ENCODE measurements at regions of chr10 and their contacts with region 1.

Region 1: GRCh38 chr10:28179006-28179742 is 123.7 kb downstream of the MPP7 start:
- DNase-seq: no peak
- ATAC-seq: peak in 3 of 4 donors; percentile 53 to 81 (median 66)
- H3K4me3 ChIP-seq: no peak overlapping the region
- H3K27ac ChIP-seq: no peak overlapping the region
- H3K4me1 ChIP-seq: peaks cover 19% of the 10 kb centered on the region
- H3K27me3 ChIP-seq: no peaks in the 10 kb centered on the region
- CTCF ChIP-seq: peak; percentile 80

Region 2: DNA sequence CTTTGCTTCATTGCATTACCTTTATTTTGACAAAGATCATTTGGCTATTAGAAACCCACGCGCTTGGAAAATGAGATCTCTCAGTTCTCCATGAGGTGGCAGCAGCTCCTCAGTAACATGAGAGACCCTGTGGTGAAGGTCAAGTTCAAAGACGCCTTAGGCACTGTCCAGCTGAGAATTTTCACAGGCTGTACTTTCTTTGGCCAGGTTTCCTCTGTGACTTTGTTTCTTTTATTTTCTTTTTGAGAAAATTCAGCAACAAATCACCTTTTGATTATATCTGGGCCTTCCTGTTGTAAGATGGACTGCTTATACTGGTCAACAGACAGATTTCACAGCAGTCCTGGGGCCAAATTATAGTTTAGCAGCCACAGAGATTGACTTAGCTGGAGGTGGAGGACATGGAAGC is 620.6 kb before region 1 on chr10:
- intact Hi-C with region 1: loop called in 1 of 2 experiments (anchors 5 kb)
- DNase-seq: peak in 1 of 2 donors; percentile 29
- ATAC-seq: peak; percentile 80 to 92 (median 82)
- H3K4me3 ChIP-seq: no peak overlapping the region
- H3K27ac ChIP-seq: no peak overlapping the region
- H3K4me1 ChIP-seq: no peaks in the 10 kb centered on the region
- H3K27me3 ChIP-seq: no peaks in the 10 kb centered on the region
- CTCF ChIP-seq: peak; percentile 70

Region 3: DNA sequence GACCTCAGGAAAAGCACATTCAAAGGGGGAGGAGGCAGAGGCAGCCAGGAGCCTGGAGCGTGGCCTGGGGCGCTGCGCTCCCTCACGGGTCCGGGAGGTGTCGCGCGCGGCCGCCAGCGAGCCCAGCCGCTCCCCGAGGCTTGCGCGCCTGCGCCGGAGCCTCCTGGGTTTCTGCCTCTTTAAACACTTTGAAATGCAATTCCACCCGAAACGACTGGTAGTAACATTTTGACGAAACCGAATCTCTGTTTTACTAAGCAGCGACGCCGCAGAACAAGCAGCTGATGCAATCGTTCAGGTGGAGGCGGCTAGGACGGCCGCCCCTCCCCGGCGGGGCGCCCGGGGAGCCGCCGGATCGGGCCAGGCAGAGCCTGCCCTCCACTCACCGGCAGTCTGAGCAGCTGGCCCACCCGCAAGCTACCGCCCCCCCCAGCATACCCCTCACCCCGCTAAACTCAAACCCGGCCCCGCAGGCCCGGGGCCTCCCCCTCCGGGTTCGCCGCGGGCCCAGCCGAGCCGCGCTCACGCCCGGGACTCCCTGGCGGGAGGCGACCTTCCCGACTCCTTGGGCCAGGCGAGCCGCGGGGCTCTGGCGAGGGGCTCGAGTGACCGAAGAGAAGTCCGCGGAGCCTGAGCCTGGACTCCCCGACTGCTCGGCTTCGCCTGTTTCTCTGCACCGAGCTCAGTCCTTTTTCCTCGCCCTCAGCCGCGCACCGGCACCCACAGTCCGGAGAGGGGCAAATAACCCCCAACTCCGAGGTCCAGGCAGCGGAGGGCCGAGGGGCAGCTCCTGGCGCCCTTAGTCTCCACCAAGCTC is 436.8 kb before region 1 on chr10:
- intact Hi-C with region 1: loop called (anchors 5 kb)
- DNase-seq: peak; percentile 85 to 86
- ATAC-seq: peak; percentile 87 to 92 (median 90)
- H3K4me3 ChIP-seq: peak overlapping the region; percentile 75
- H3K27ac ChIP-seq: peak overlapping the region; percentile 37
- H3K4me1 ChIP-seq: peaks cover 22% of the 10 kb centered on the region
- H3K27me3 ChIP-seq: peaks cover 0 to 59% (median 34%) of the 10 kb centered on the region in 3 donors
- CTCF ChIP-seq: peak; percentile 77

Region 4: DNA sequence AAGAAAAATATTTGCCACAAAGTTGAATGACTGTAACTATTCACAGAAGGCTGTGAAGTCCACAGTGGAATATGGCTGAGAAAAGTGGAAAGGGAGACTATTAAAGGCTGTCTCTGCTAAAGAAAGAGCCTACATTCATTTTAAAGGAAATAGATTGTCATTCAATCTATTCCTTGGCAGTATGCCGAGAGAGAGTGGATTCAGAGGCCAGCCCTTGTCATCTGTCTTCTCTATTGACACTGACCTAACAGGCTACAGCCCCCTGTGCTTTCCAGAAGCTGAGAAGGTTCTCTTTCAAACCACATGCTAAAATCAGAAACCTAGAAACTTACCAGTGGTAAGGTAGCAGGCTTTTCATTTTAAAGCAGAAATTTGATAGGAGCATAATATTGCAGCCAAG is 192.4 kb before region 1 on chr10:
- intact Hi-C with region 1: no loop called
- DNase-seq: no peak
- ATAC-seq: no peak
- H3K4me3 ChIP-seq: no peak overlapping the region
- H3K27ac ChIP-seq: no peak overlapping the region
- H3K4me1 ChIP-seq: no peaks in the 10 kb centered on the region
- H3K27me3 ChIP-seq: no peaks in the 10 kb centered on the region
- CTCF ChIP-seq: no peak

Region 5: GRCh38 chr10:28036587-28036986 is 142.6 kb before region 1 on chr10:
- intact Hi-C with region 1: no loop called
- DNase-seq: no peak
- ATAC-seq: no peak
- H3K4me3 ChIP-seq: no peak overlapping the region
- H3K27ac ChIP-seq: no peak overlapping the region
- H3K4me1 ChIP-seq: no peaks in the 10 kb centered on the region
- H3K27me3 ChIP-seq: peaks cover 0 to 8% (median 0%) of the 10 kb centered on the region in 3 donors
- CTCF ChIP-seq: no peak

Region 6: DNA sequence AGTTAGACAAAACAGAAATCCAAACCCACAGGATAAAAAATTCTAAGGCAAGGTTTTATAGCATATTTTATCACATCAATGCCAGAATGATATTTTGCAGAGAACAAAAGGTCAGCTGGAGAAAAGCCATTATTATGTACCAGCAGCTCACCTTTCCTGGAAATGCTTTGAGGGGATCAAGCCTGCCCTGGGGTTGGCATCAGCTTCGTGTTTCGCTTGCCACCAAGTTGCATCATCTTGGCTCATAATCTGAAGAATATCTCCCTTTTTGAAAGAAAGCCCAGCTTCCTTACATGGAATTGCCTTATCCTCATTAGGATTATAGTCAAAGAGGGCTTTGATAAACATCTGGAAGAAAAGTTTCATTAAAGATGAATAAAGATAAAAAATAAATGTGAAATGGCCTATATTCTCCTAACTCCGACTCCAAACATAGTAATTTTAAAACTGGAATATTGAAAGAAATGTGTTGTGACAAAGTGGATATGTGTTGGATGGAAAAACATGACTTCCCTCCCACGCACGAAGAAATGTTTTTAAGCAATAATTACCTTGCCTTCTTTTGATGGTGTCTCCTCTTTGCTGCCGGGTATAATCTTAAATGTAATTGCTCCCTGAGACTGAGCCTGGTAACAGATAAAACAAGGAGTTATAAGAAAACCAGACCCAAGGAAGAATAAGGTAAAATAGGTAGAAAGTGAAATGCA is 59.0 kb before region 1 on chr10:
- intact Hi-C with region 1: loop called in 1 of 2 experiments (anchors 10 kb)
- DNase-seq: peak in 1 of 2 donors; percentile 15
- ATAC-seq: peak in 2 of 4 donors; percentile 46 to 53
- H3K4me3 ChIP-seq: no peak overlapping the region
- H3K27ac ChIP-seq: no peak overlapping the region
- H3K4me1 ChIP-seq: peaks cover 22% of the 10 kb centered on the region
- H3K27me3 ChIP-seq: no peaks in the 10 kb centered on the region
- CTCF ChIP-seq: no peak

Region 7: DNA sequence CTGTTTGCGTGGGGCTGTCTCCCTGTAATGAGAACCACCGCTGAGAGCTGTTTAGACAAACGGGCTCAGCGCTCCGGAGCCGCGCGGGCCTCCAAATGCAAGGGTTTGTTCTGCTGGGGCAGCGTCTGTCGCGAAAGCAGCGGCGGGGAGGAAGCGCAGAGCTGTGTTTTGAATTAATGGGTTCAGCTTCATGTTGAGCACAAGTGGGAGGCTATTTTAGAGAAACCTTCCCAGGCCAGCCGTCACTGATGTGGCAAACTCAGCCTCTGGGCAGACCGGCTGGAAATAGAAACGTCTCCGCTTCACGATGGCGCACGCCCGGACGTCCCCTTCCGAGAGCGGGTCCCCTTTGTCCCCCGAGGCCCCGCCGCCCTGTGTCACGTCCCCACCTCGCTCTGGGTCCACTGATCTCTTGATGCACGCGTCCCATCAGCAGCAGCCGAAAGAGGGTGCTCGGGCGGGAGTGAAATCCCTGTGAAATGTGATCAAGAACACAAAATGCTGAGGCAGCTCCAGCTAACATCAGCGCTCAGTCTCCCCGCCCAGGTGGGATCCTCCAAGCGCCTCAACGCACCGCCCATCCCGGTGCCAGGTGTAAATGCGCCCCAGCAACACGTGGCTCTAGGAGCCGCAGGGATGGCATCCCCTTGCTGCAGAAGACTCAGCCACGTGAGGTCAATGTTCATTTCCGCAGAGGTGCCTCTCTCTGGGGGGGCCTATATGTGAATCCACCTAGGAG is 543.1 kb after region 1 on chr10:
- intact Hi-C with region 1: no loop called
- DNase-seq: peak; percentile 19 to 51
- ATAC-seq: peak; percentile 16 to 69 (median 25)
- H3K4me3 ChIP-seq: peak overlapping the region; percentile 62
- H3K27ac ChIP-seq: no peak overlapping the region
- H3K4me1 ChIP-seq: no peaks in the 10 kb centered on the region
- H3K27me3 ChIP-seq: no peaks in the 10 kb centered on the region
- CTCF ChIP-seq: no peak

Measured in psoas muscle (tissue), 8 donors.